ENCODE measurements at regions of chrX and their contacts with region 1.

Region 1: DNA sequence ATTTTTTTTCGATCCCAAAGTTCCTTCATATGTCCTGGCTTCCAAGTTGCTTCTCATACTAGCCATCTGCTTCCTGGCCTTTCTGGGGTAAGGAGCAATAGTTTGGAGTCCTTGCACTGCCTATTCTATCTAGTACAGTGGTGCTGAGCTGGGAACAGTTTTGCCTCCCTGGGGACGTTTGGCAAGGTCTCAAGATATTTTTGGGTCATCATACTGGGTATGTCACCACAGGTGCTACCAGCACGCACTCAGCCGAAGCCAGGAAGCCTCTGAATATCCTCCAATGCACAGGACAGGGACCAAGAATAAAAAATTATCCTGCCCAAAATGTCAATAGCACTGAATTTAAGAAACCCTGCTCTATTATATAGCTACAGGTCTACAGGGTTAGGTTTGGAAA is 35.4 kb upstream of the TMSB15B start:
- DNase-seq: no peak
- H3K4me3 ChIP-seq: no peak overlapping the region
- H3K27ac ChIP-seq: no peak overlapping the region
- H3K4me1 ChIP-seq: no peaks in the 10 kb centered on the region
- H3K27me3 ChIP-seq: no peaks in the 10 kb centered on the region
- CTCF ChIP-seq: no peak
- EP300 ChIP-seq: no peak
- POLR2A ChIP-seq: no peak
- RAD21 ChIP-seq: no peak

Region 2: DNA sequence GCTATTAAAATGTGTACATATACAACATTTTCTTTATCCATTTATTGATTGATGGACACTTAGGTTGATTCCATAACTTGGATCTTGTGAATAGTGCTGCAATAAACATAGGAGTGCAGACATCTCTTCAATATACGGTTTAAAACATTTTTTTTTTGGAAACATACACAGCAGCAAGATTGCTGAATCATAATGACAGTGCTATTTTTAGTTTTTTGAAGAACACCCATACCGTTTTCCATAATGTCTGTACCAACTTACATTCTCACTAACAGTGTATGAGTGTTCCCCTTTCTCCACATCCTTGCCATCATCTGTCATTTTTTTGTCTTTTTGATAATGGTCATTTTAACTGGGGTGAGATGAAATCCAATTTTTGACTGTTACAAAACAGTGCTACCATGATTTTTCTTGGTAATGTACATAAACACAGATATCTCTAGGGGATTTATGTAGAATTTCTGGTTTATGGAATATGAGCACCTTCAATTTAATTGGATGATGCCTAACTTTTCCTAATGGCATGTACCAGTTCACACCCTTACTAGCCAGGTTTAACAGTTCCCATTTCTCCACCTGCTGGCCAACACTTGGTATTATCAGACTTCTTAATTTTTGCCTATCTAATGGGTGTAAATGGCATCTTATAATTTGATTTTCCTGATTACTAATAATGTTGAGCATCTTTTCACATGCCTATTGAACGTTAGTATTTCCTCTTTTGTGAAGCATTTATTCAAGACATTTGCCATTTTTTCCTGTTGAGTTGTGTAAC is 14.4 kb after region 1 on chrX:
- CTCF ChIA-PET with region 1: interaction called, 14 read pairs
- POLR2A ChIA-PET with region 1: no interaction called
- DNase-seq: no peak
- H3K4me3 ChIP-seq: no peak overlapping the region
- H3K27ac ChIP-seq: no peak overlapping the region
- H3K4me1 ChIP-seq: no peaks in the 10 kb centered on the region
- H3K27me3 ChIP-seq: no peaks in the 10 kb centered on the region
- CTCF ChIP-seq: peak in 2 of 3 experiments; percentile 26 to 43; a peak in 2 of 4 replicates
- EP300 ChIP-seq: no peak
- POLR2A ChIP-seq: no peak
- RAD21 ChIP-seq: peak; percentile 29 to 45; a peak in 3 of 4 replicates

Measured in H1 (cell line).